ENCODE measurements at regions of chr5 and their contacts with region 1.

Region 1: GRCh38 chr5:142699184-142699720 is 13.4 kb upstream of the FGF1 start:
- H3K4me3 Mint-ChIP-seq: no peak overlapping the region
- H3K27ac Mint-ChIP-seq: no peak overlapping the region
- H3K4me1 Mint-ChIP-seq: peaks cover 5% of the 10 kb centered on the region
- H3K27me3 Mint-ChIP-seq: peaks cover 12% of the 10 kb centered on the region

Region 2: DNA sequence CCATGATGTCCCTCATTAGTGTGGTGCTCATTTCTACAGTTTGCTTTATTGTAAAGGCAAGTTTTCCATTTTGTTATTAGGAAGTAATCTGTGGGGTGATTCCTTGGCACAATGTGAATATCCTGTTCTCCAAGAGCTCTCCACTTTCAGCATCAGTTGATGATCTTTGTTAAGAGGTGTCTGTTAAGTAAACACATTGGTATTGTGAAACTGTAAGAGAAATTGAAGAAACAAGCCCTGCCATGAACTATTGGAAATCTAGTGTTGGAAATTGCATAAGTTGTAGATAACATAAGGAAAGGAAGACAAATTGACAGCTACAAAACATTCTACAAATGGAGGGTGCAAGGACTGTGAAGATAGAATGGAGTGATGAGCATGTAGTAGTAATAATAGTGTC is 713.2 kb before region 1 on chr5:
- intact Hi-C with region 1: loop called (anchors 10 kb)
- H3K4me3 Mint-ChIP-seq: no peak overlapping the region
- H3K27ac Mint-ChIP-seq: no peak overlapping the region
- H3K4me1 Mint-ChIP-seq: no peaks in the 10 kb centered on the region
- H3K27me3 Mint-ChIP-seq: no peaks in the 10 kb centered on the region

Region 3: GRCh38 chr5:142151436-142152383 is 547.5 kb before region 1 on chr5:
- intact Hi-C with region 1: loop called (anchors 2 kb)
- H3K4me3 Mint-ChIP-seq: no peak overlapping the region
- H3K27ac Mint-ChIP-seq: no peak overlapping the region
- H3K4me1 Mint-ChIP-seq: peaks cover 10% of the 10 kb centered on the region
- H3K27me3 Mint-ChIP-seq: no peaks in the 10 kb centered on the region

Region 4: GRCh38 chr5:142611154-142611553 is 88.1 kb before region 1 on chr5:
- intact Hi-C with region 1: loop called (anchors 1 kb)
- H3K4me3 Mint-ChIP-seq: no peak overlapping the region
- H3K27ac Mint-ChIP-seq: no peak overlapping the region
- H3K4me1 Mint-ChIP-seq: no peaks in the 10 kb centered on the region
- H3K27me3 Mint-ChIP-seq: peaks cover 34% of the 10 kb centered on the region

Region 5: GRCh38 chr5:142655339-142656267 is 43.6 kb before region 1 on chr5:
- intact Hi-C with region 1: loop called (anchors 1 kb)
- H3K4me3 Mint-ChIP-seq: no peak overlapping the region
- H3K27ac Mint-ChIP-seq: no peak overlapping the region
- H3K4me1 Mint-ChIP-seq: no peaks in the 10 kb centered on the region
- H3K27me3 Mint-ChIP-seq: peaks cover 24% of the 10 kb centered on the region

Measured in dendritic cell treated with granulocyte-macrophage colony-stimulating factor and Interleukin-4, amounts not matched to agents 40 ng/mL and 50 ng/mL, for 4 days (primary cell).